H1 (cell line): ENCODE measurements at regions of chr3 and their contacts with region 1.

Region 1: DNA sequence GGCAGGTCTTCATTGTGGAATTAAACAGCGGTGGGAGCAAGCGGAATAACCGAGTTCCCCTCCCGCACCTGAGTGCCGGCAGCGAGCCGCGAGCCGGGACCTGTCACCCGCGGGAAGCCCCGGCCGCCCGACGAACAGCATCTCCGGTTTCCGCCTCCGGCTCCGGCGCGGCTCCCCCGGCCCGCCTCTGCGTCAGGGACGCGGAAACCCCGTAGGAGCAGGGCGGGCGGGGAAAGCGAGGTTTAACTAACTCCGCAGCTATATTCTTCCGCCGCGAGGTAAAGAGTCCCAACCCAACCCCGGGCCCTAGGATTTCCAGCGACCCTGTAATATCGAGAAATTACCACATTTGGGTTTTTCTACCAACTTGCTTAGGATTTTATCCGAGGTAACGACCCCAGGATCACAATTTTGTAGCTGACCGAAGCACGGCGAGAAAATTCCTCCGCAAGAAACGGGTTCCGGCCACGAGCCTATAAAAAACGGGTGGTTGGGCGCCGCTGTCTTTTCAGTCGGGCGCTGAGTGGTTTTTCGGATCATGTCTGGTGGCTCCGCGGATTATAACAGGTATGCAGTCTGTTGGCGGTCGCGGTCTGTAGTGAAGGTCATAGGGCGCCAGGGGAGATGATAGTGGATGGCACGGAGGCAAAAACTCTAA is at the start of gene EIF4A2:
- DNase-seq: peak; percentile 51 to 93
- H3K4me3 ChIP-seq: peak within 1 kb of the TSS; percentile 98 to 100 (median 99)
- H3K27ac ChIP-seq: peak within 1 kb of the TSS; percentile 98
- H3K4me1 ChIP-seq: peaks cover 0 to 3% (median 1%) of the 10 kb centered on the region in 4 experiments; a peak in 2 of 7 replicates
- H3K27me3 ChIP-seq: no peaks in the 10 kb centered on the region
- CTCF ChIP-seq: no peak
- EP300 ChIP-seq: peak; percentile 22 to 57; a peak in 2 of 3 replicates
- POLR2A ChIP-seq: peak; percentile 98 to 100
- RAD21 ChIP-seq: 0 out of 4 replicates have a peak, but pooled peaks of 1 of the 2 experiments have one; percentile 5
- total RNA-seq, gene EIF4A2: 596 and 604 TPM in 2 replicates

Region 2: GRCh38 chr3:186599142-186599784 is 183.9 kb before region 1 on chr3:
- CTCF ChIA-PET with region 1: no interaction called
- POLR2A ChIA-PET with region 1: interaction called, 85 read pairs
- DNase-seq: no peak
- H3K4me3 ChIP-seq: no peak overlapping the region
- H3K27ac ChIP-seq: no peak overlapping the region
- H3K4me1 ChIP-seq: no peaks in the 10 kb centered on the region
- H3K27me3 ChIP-seq: no peaks in the 10 kb centered on the region; a peak in 1 of 7 replicates
- CTCF ChIP-seq: no peak
- EP300 ChIP-seq: no peak
- POLR2A ChIP-seq: no peak
- RAD21 ChIP-seq: no peak

Region 3: DNA sequence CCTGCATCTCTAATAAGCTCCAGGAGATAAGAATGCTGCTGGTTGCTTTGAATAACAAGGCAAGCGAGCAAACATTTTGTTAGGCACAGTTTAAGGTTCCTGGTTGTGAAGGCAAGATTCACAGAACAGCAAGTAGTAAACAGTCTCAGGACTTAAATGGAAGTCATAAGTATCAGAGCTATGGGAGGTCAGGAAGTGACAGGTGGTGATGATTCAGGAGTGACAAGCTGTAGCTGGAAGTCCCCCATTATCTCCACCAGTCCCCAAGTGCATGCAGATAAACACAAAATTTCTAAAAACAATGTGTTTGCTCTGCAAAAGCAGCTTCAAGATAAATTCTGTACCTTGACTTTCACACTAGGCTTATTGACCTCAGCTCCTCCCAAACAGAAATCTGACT is 139.7 kb before region 1 on chr3:
- CTCF ChIA-PET with region 1: no interaction called
- POLR2A ChIA-PET with region 1: interaction called, 13 read pairs
- DNase-seq: no peak
- H3K4me3 ChIP-seq: no peak overlapping the region
- H3K27ac ChIP-seq: no peak overlapping the region
- H3K4me1 ChIP-seq: peaks cover 5 to 12% (median 8%) of the 10 kb centered on the region in 4 experiments; a peak in 5 of 7 replicates
- H3K27me3 ChIP-seq: no peaks in the 10 kb centered on the region; a peak in 1 of 7 replicates
- CTCF ChIP-seq: no peak
- EP300 ChIP-seq: no peak
- POLR2A ChIP-seq: no peak
- RAD21 ChIP-seq: no peak

Region 4: DNA sequence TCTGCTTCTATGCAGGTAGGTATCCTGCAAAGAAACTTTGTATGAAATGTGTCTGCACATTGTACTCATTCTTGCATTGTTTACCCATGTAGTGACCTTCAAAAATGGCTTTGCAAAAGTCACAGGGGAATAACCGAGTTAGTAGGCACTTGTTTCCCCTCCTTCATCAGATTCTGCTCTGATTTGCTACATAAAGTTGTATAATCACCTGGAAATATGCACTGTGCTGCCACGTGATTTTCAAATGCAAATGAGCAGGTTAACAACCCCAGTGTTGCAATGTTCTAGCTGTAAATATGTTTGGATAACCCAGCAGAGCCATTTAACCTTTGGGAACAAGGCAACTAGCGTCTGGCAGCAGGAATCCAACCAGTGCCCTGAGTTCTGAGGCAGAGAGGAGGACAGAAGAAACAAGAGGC is 66.2 kb before region 1 on chr3 and contains the start of gene KNG1:
- CTCF ChIA-PET with region 1: interaction called, 3 read pairs
- POLR2A ChIA-PET with region 1: interaction called, 10 read pairs
- DNase-seq: no peak
- H3K4me3 ChIP-seq: no peak within 1 kb of the TSS
- H3K27ac ChIP-seq: no peak within 1 kb of the TSS
- H3K4me1 ChIP-seq: peaks cover 0 to 4% (median 0%) of the 10 kb centered on the region in 4 experiments; a peak in 1 of 7 replicates
- H3K27me3 ChIP-seq: no peaks in the 10 kb centered on the region
- CTCF ChIP-seq: no peak
- EP300 ChIP-seq: no peak
- POLR2A ChIP-seq: no peak
- RAD21 ChIP-seq: no peak
- total RNA-seq, gene KNG1: 0.31 TPM in 1 of 2 replicates, not detected in the other

Region 5: DNA sequence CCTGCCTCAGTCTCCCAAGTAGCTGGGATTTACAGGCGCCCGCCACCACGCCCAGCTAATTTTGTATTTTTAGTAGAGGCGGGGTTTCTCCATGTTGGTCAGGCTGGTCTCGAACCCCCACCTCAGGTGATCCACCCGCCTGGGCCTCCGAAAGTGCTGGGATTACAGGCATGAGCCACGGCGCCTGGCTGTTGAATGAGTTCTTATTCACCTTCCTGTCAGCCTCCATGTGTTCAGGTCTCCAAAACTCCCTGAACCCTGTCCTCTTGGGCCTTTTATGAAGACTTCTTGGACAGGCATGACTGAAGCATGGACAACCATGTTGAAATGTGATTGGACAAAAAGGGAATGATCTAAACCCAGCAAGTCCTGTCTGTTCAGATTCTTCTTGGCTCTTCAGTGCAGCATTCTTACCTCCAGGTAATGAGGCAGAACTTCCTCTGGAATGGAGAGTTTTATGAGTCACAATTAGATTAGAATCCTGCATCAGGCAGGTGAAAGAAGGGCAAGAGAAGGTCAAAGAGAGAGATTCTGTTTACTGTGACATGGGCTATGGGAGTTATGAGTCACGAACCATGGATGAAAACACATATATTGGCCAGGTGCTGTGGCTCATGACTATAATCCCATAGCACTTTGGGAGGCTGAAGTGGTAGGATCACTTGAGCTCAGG is 22.9 kb before region 1 on chr3:
- CTCF ChIA-PET with region 1: no interaction called
- POLR2A ChIA-PET with region 1: interaction called, 54 read pairs
- DNase-seq: no peak
- H3K4me3 ChIP-seq: no peak overlapping the region
- H3K27ac ChIP-seq: no peak overlapping the region
- H3K4me1 ChIP-seq: no peaks in the 10 kb centered on the region
- H3K27me3 ChIP-seq: no peaks in the 10 kb centered on the region
- CTCF ChIP-seq: no peak
- EP300 ChIP-seq: no peak
- POLR2A ChIP-seq: no peak
- RAD21 ChIP-seq: no peak

Region 6: GRCh38 chr3:186815435-186815834 is 32.2 kb after region 1 on chr3:
- CTCF ChIA-PET with region 1: no interaction called
- POLR2A ChIA-PET with region 1: interaction called, 77 read pairs
- DNase-seq: peak in 1 of 2 experiments; percentile 10
- H3K4me3 ChIP-seq: no peak overlapping the region
- H3K27ac ChIP-seq: no peak overlapping the region
- H3K4me1 ChIP-seq: peaks cover 0 to 4% (median 3%) of the 10 kb centered on the region in 4 experiments; a peak in 3 of 7 replicates
- H3K27me3 ChIP-seq: no peaks in the 10 kb centered on the region
- CTCF ChIP-seq: no peak
- EP300 ChIP-seq: no peak
- POLR2A ChIP-seq: no peak
- RAD21 ChIP-seq: no peak

Region 7: DNA sequence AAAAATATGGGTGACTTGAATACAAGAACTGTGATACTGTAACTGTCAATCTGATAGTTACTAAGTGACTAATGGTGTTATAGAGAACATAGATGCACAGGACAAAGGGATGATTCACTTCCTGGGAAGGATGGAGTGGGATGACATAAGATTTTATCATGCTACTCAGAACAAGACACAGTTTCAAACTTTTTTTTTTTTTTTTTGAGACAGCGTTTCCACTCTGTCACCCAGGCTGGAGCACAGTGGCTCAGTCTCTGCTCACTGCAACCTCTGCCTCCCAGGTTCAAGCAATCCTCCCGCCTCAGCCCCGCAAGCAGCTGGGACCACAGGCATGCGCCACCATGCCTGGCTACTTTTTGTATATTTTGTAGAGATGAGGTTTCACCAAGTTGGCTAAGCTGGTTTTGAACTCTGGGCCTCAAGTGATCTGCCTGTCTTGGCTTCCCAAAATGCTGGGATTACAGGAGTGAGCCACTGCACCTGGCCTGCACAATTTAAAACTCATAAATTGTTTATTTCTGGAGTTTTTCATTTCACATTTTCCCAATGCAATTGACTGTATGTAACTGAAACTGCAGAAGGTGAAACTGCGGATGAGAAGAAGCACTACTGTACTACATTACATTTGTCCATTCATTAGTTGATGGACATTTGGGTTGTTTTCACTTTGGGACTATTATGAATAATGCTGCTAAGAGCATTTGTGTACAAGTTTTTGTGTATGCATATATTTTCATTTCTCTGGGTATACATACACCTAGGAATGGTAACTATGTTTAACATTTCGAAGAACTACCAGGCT is 99.9 kb after region 1 on chr3:
- CTCF ChIA-PET with region 1: no interaction called
- POLR2A ChIA-PET with region 1: no interaction called
- DNase-seq: no peak
- H3K4me3 ChIP-seq: no peak overlapping the region
- H3K27ac ChIP-seq: no peak overlapping the region
- H3K4me1 ChIP-seq: peaks cover 0 to 13% (median 9%) of the 10 kb centered on the region in 4 experiments; a peak in 4 of 7 replicates
- H3K27me3 ChIP-seq: no peaks in the 10 kb centered on the region
- CTCF ChIP-seq: no peak
- EP300 ChIP-seq: no peak
- POLR2A ChIP-seq: no peak
- RAD21 ChIP-seq: no peak